Endothelial cell of umbilical vein (primary cell): ENCODE measurements at regions of chr6 and their contacts with region 1.

Region 1: GRCh38 chr6:65501045-65501444 is 206.0 kb downstream of the EYS start:
- DNase-seq: no peak
- H3K4me3 ChIP-seq: no peak overlapping the region
- H3K27ac ChIP-seq: no peak overlapping the region
- H3K4me1 ChIP-seq: no peaks in the 10 kb centered on the region
- H3K27me3 ChIP-seq: no peaks in the 10 kb centered on the region
- CTCF ChIP-seq: no peak
- POLR2A ChIP-seq: no peak

Region 2: DNA sequence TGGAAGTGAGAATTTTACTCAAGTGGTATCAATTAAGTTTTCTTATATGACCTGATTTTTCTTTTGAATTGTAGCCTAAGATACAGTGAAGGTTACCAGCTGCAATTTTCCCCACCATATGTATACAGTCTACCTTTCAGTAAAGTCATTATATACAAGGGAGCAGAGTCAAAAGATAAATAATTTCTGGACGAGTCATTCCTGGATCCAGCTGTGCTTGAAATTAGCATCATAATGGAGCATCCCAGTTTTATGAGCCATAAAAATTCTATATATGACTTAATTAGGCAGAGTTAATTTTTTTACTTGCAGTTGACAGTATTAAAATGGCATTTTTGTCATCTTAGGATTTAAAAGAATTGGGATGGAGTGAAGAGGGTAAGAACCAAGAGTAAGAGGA is 857.0 kb before region 1 on chr6:
- CTCF ChIA-PET with region 1: no interaction called
- POLR2A ChIA-PET with region 1: no interaction called
- dilution Hi-C with region 1: no loop called
- intact Hi-C with region 1: loop called (anchors 5 kb)
- DNase-seq: no peak
- H3K4me3 ChIP-seq: no peak overlapping the region
- H3K27ac ChIP-seq: no peak overlapping the region
- H3K4me1 ChIP-seq: no peaks in the 10 kb centered on the region
- H3K27me3 ChIP-seq: no peaks in the 10 kb centered on the region
- CTCF ChIP-seq: no peak
- POLR2A ChIP-seq: no peak

Region 3: GRCh38 chr6:65933390-65933789 is 432.3 kb after region 1 on chr6:
- CTCF ChIA-PET with region 1: no interaction called
- POLR2A ChIA-PET with region 1: no interaction called
- dilution Hi-C with region 1: no loop called
- intact Hi-C with region 1: no loop called
- DNase-seq: no peak
- H3K4me3 ChIP-seq: no peak overlapping the region
- H3K27ac ChIP-seq: no peak overlapping the region
- H3K4me1 ChIP-seq: no peaks in the 10 kb centered on the region
- H3K27me3 ChIP-seq: no peaks in the 10 kb centered on the region
- CTCF ChIP-seq: no peak
- POLR2A ChIP-seq: no peak